CD4-positive, alpha-beta memory T cell (primary cell): ENCODE measurements at regions of chr19 and their contacts with region 1.

Region 1: DNA sequence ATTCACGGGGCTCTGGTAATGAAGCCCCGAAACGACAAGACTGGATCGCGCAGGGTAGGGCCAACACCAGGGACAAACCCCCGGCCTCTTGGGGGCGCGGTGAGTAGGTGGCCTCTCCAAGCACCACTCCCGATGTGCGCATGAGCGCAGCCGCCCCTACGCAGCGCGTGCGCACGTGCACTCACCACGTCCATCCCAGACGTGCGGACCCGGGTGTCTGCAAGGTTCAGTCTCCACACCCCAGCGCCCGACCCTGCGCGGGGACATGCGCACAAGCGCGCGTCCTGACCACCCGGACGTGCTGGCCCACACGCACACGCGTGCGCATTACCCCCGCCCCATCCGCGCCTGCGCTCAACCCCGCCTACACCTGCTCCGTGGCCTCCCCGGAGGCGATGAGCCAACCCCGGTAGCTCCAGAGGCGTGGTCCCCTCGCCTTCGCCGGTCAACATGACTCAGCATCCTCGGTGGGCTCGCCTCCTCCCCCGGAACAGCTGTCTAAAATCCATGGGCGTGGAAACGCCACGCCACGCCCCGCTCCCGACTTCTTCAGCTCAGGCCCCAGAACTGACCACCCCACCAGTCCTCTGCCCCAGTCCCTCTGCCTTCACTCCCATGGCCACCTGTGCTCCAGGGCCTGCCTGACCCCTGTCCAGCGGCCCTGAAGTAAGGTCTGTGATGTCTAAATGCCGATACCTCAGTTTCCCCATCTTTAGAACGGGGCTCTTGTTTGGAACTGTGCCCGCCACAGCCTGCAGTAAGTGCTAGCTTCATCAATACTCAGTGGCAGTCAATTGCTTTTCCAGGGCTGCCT is 5.6 kb upstream of the GPI start:
- DNase-seq: peak; percentile 90 to 94 (median 92)
- H3K4me3 ChIP-seq: peak overlapping the region; percentile 52 to 86
- H3K4me3 Mint-ChIP-seq: peak overlapping the region; percentile 82 to 95 (median 90)
- H3K27ac ChIP-seq: peak overlapping the region; percentile 56
- H3K27ac Mint-ChIP-seq: peak overlapping the region; percentile 89 to 97 (median 95)
- H3K4me1 ChIP-seq: peaks cover 20% of the 10 kb centered on the region
- H3K4me1 Mint-ChIP-seq: peaks cover 15 to 35% (median 26%) of the 10 kb centered on the region in 4 donors
- H3K27me3 ChIP-seq: no peaks in the 10 kb centered on the region
- H3K27me3 Mint-ChIP-seq: no peaks in the 10 kb centered on the region

Region 2: GRCh38 chr19:34404109-34404897 is 45.0 kb after region 1 on chr19 and contains the start of gene PDCD2L:
- CTCF ChIA-PET with region 1: no interaction called
- POLR2A ChIA-PET with region 1: interaction called, 4 read pairs
- intact Hi-C with region 1: loop called (anchors 2 kb)
- DNase-seq: peak; percentile 87 to 93 (median 89)
- H3K4me3 ChIP-seq: peak within 1 kb of the TSS; percentile 78 to 100
- H3K4me3 Mint-ChIP-seq: peak within 1 kb of the TSS; percentile 88 to 94 (median 92)
- H3K27ac ChIP-seq: peak within 1 kb of the TSS; percentile 74
- H3K27ac Mint-ChIP-seq: peak within 1 kb of the TSS; percentile 82 to 93 (median 85)
- H3K4me1 ChIP-seq: peaks cover 16% of the 10 kb centered on the region
- H3K4me1 Mint-ChIP-seq: peaks cover 4 to 27% (median 17%) of the 10 kb centered on the region in 4 donors
- H3K27me3 ChIP-seq: no peaks in the 10 kb centered on the region
- H3K27me3 Mint-ChIP-seq: no peaks in the 10 kb centered on the region
- total RNA-seq, gene PDCD2L: 8.8 to 12.3 TPM

Region 3: GRCh38 chr19:35592226-35592625 is 1232.9 kb after region 1 on chr19:
- CTCF ChIA-PET with region 1: no interaction called
- POLR2A ChIA-PET with region 1: no interaction called
- intact Hi-C with region 1: no loop called
- DNase-seq: peak in 4 of 5 donors; percentile 14 to 34 (median 22)
- H3K4me3 ChIP-seq: no peak overlapping the region
- H3K4me3 Mint-ChIP-seq: no peak overlapping the region
- H3K27ac ChIP-seq: no peak overlapping the region
- H3K27ac Mint-ChIP-seq: no peak overlapping the region
- H3K4me1 ChIP-seq: no peaks in the 10 kb centered on the region
- H3K4me1 Mint-ChIP-seq: peaks cover 0 to 2% (median 1%) of the 10 kb centered on the region in 4 donors
- H3K27me3 ChIP-seq: no peaks in the 10 kb centered on the region
- H3K27me3 Mint-ChIP-seq: peaks cover 3 to 4% of the 10 kb centered on the region in 2 donors